ENCODE measurements at regions of chr11 and their contacts with region 1.

Region 1: GRCh38 chr11:1109918-1110705 is 35.4 kb downstream of the MUC2 start:
- DNase-seq: no peak
- ATAC-seq: no peak
- H3K4me3 ChIP-seq: no peak overlapping the region
- H3K4me3 Mint-ChIP-seq: no peak overlapping the region
- H3K27ac ChIP-seq: no peak overlapping the region
- H3K27ac Mint-ChIP-seq: no peak overlapping the region
- H3K4me1 ChIP-seq: no peaks in the 10 kb centered on the region
- H3K4me1 Mint-ChIP-seq: peaks cover 3% of the 10 kb centered on the region
- H3K27me3 ChIP-seq: no peaks in the 10 kb centered on the region
- H3K27me3 Mint-ChIP-seq: no peaks in the 10 kb centered on the region
- CTCF ChIP-seq: no peak

Region 2: DNA sequence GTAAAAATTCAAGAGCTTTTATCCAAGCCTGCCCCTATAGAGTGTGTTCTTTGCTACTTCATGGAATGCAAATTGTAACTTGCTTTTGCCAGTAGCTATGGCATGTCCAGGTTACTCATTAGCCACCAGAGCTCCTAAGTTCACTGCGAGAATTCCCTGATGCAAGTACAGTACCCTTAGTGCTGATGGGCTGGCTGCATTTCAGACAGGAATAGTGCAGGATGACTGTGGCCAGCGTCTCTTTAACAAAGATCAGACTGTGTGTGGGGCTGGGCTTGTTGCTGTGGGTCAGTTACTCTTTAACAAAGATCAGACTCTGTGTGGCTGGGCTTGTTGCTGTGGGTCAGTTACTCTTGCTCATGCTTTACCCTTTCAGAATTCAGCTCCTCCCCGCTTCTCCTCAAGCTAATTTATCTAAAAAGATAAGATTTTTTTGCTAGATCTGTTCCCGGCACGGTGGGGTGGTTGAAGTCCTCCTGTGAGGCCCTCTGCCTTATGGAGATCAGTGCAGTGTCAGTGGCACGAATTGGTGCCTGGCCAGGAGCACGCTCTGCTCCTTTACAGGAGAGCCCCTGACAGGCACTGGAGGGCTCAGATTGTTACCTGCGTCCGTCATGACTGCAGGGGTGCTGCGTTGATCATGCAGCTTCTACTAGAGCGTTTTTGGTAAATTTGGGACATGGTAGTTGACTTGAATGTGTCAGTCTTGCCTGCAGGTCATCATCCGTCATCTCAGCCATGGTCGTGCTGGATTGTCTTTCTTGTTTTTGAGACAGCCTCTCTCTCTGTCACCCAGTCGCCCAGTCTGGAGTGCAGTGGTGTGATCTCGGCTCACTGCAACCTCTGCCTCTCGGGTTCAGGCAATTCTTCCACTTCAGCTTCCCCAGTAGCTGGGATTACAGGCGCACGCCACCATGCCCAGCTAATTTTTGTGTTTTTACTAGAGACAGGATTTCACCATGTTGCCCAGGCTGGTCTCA is 157.4 kb before region 1 on chr11:
- CTCF ChIA-PET with region 1: no interaction called
- POLR2A ChIA-PET with region 1: no interaction called
- intact Hi-C with region 1: no loop called
- DNase-seq: no peak
- ATAC-seq: no peak
- H3K4me3 ChIP-seq: no peak overlapping the region
- H3K4me3 Mint-ChIP-seq: no peak overlapping the region
- H3K27ac ChIP-seq: no peak overlapping the region
- H3K27ac Mint-ChIP-seq: no peak overlapping the region
- H3K4me1 ChIP-seq: peaks cover 11% of the 10 kb centered on the region
- H3K4me1 Mint-ChIP-seq: peaks cover 28% of the 10 kb centered on the region
- H3K27me3 ChIP-seq: no peaks in the 10 kb centered on the region
- H3K27me3 Mint-ChIP-seq: no peaks in the 10 kb centered on the region
- CTCF ChIP-seq: no peak

Region 3: GRCh38 chr11:1360835-1361357 is 250.8 kb after region 1 on chr11:
- CTCF ChIA-PET with region 1: no interaction called
- POLR2A ChIA-PET with region 1: no interaction called
- intact Hi-C with region 1: loop called in 1 of 2 experiments (anchors 5 kb)
- DNase-seq: no peak
- ATAC-seq: no peak
- H3K4me3 ChIP-seq: no peak overlapping the region
- H3K4me3 Mint-ChIP-seq: no peak overlapping the region
- H3K27ac ChIP-seq: no peak overlapping the region
- H3K27ac Mint-ChIP-seq: no peak overlapping the region
- H3K4me1 ChIP-seq: no peaks in the 10 kb centered on the region
- H3K4me1 Mint-ChIP-seq: no peaks in the 10 kb centered on the region
- H3K27me3 ChIP-seq: peaks cover 0 to 3% of the 10 kb centered on the region in 2 experiments
- H3K27me3 Mint-ChIP-seq: peaks cover 9% of the 10 kb centered on the region
- CTCF ChIP-seq: no peak

Measured in CD8-positive, alpha-beta T cell (primary cell).